OCI-LY7 (cell line): ENCODE measurements at regions of chr1 and their contacts with region 1.

Region 1: GRCh38 chr1:153967082-153968000 is at the start of gene CREB3L4:
- DNase-seq: peak; percentile 98
- H3K4me3 ChIP-seq: peak within 1 kb of the TSS; percentile 78
- H3K27ac ChIP-seq: peak within 1 kb of the TSS; percentile 89
- H3K4me1 ChIP-seq: peaks cover 40% of the 10 kb centered on the region
- CTCF ChIP-seq: peak; percentile 67
- total RNA-seq, gene CREB3L4: 17.0 and 17.4 TPM in 2 replicates

Region 2: DNA sequence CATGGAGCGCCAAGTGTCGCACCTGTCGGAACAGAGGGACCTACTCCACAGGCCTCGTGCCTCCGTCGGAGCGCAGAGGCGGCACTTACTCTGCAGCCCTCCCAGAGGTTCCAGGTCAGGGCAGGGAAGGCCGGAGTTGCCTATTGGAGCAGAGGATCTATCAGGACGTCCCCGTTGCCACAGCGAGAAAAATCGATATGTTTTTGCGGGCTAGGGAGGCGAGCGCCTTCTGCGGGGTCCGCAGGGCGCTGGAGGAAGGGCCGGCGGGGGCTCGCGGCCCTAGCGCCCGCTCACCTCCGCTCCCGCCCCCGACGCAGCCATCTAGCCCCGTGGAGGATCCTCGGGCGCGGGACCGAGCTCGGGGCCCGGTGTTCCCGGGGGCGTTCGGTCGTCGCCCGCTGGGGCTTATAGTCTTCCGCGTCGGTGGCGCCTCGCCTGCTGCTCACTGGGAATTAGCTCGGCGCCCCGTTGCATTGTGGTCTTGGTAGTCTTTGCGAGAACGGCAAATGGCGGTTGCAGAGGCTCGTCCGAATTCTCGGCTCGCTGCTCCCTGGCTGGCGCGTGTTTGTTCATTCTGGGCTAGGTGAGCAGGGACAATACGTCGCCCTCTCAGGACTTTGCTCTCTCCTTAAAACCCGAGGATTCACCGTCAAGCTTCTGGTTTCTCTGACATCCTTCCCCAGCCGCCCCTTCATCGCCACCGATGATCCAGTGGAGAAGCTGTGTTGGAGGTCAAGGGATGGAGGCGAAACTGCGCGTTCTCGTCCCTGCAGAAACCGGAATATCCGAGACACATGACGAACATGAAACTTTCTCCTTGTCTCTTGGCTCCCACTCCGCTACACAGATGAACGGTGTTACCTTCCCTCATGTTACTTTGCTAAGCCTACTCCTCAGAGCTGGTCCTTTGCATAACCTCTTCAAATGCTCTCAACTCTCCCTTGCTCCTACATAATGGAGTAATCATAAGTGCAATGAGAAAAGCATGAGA is 10.2 kb after region 1 on chr1 and contains the start of gene JTB:
- CTCF ChIA-PET with region 1: interaction called, 4 read pairs
- POLR2A ChIA-PET with region 1: interaction called, 54 read pairs
- intact Hi-C with region 1: loop called (anchors 1 kb)
- DNase-seq: peak; percentile 88
- H3K4me3 ChIP-seq: peak within 1 kb of the TSS; percentile 86
- H3K27ac ChIP-seq: peak within 1 kb of the TSS; percentile 58
- H3K4me1 ChIP-seq: peaks cover 22% of the 10 kb centered on the region
- CTCF ChIP-seq: no peak
- total RNA-seq, gene JTB: 169 and 178 TPM in 2 replicates